Calu3 (cell line): ENCODE measurements at regions of chr9 and their contacts with region 1.

Region 1: GRCh38 chr9:19230356-19231125 is at the start of gene DENND4C:
- DNase-seq: peak; percentile 85
- H3K4me3 Mint-ChIP-seq: no peak within 1 kb of the TSS
- H3K27ac Mint-ChIP-seq: peak within 1 kb of the TSS; percentile 76
- H3K4me1 Mint-ChIP-seq: peaks cover 8% of the 10 kb centered on the region
- H3K27me3 Mint-ChIP-seq: no peaks in the 10 kb centered on the region
- CTCF ChIP-seq: no peak
- total RNA-seq, gene DENND4C: 28.5 and 32.2 TPM in 2 replicates

Region 2: DNA sequence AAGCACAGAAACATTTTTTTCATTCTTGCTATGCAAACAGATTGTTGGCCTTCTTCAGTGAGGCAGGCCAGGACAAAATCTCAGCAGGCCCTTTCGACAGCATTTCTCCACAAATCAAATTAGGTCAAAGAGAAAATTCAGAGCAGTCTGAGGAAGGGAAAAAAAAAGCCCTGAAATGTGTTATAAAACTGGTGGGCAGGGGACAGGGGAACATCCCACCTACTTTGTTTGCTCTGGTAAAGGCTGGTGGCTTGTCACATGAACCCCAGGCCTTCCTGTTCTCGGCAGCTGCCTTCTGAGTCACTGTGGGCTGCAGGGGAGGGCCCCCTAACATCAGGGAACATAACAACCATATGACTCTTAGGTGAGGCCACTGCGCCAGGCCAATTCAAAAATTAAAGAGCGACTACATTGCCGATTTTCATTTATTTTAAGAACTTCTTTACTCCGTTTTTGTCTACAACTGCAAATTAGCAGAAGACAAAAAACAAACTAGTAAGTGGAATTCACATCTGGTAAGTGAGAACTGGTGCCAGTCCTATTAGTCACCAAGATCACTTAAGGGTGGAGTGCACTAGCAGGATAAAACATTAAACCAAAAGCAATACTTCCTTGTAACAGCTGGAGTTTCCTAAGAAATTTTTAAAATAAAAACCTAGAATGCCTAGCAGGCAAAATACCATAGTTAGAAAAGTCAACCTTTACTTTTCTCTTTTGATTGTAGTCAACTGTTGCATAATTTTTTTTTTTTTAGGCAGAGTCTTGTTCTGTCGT is 46.2 kb before region 1 on chr9:
- CTCF ChIA-PET with region 1: interaction called, 3 read pairs
- intact Hi-C with region 1: loop called (anchors 5 kb)
- DNase-seq: peak; percentile 63
- H3K4me3 Mint-ChIP-seq: peak overlapping the region; percentile 21
- H3K27ac Mint-ChIP-seq: peak overlapping the region; percentile 86
- H3K4me1 Mint-ChIP-seq: no peaks in the 10 kb centered on the region
- H3K27me3 Mint-ChIP-seq: no peaks in the 10 kb centered on the region
- CTCF ChIP-seq: no peak

Region 3: GRCh38 chr9:19281801-19282200 is 51.3 kb after region 1 on chr9:
- CTCF ChIA-PET with region 1: no interaction called
- intact Hi-C with region 1: loop called (anchors 5 kb)
- DNase-seq: no peak
- H3K4me3 Mint-ChIP-seq: no peak overlapping the region
- H3K27ac Mint-ChIP-seq: no peak overlapping the region
- H3K4me1 Mint-ChIP-seq: peaks cover 21% of the 10 kb centered on the region
- H3K27me3 Mint-ChIP-seq: no peaks in the 10 kb centered on the region
- CTCF ChIP-seq: no peak

Region 4: GRCh38 chr9:19431361-19432171 is 201.0 kb after region 1 on chr9:
- CTCF ChIA-PET with region 1: no interaction called
- intact Hi-C with region 1: no loop called
- DNase-seq: no peak
- H3K4me3 Mint-ChIP-seq: no peak overlapping the region
- H3K27ac Mint-ChIP-seq: no peak overlapping the region
- H3K4me1 Mint-ChIP-seq: no peaks in the 10 kb centered on the region
- H3K27me3 Mint-ChIP-seq: no peaks in the 10 kb centered on the region
- CTCF ChIP-seq: no peak